Dorsolateral prefrontal cortex (tissue), 120 donors: ENCODE measurements at regions of chr19 and their contacts with region 1.

Region 1: GRCh38 chr19:19531951-19532805 is 3.5 kb downstream of the YJEFN3 start:
- DNase-seq: peak; percentile 78 to 92 (median 87)
- H3K4me3 ChIP-seq: peak overlapping the region in 23 of 59 donors; percentile 5 to 45 (median 23)
- H3K27ac ChIP-seq: peak overlapping the region in 2 of 59 donors; percentile 5 to 42
- H3K27me3 ChIP-seq: no peaks in the 10 kb centered on the region
- CTCF ChIP-seq: peak; percentile 79 to 98 (median 94)

Region 2: GRCh38 chr19:19618219-19619051 is 86.3 kb after region 1 on chr19 and contains the start of gene PBX4:
- intact Hi-C with region 1: no loop called
- DNase-seq: peak; percentile 78 to 94 (median 92)
- H3K4me3 ChIP-seq: peak within 1 kb of the TSS; percentile 29 to 75 (median 56)
- H3K27ac ChIP-seq: no peak within 1 kb of the TSS
- H3K27me3 ChIP-seq: no peaks in the 10 kb centered on the region
- CTCF ChIP-seq: peak in 2 of 56 donors; percentile 12 to 14
- total RNA-seq, gene PBX4: 1.2 to 9.5 (median 4.3) TPM

Region 3: DNA sequence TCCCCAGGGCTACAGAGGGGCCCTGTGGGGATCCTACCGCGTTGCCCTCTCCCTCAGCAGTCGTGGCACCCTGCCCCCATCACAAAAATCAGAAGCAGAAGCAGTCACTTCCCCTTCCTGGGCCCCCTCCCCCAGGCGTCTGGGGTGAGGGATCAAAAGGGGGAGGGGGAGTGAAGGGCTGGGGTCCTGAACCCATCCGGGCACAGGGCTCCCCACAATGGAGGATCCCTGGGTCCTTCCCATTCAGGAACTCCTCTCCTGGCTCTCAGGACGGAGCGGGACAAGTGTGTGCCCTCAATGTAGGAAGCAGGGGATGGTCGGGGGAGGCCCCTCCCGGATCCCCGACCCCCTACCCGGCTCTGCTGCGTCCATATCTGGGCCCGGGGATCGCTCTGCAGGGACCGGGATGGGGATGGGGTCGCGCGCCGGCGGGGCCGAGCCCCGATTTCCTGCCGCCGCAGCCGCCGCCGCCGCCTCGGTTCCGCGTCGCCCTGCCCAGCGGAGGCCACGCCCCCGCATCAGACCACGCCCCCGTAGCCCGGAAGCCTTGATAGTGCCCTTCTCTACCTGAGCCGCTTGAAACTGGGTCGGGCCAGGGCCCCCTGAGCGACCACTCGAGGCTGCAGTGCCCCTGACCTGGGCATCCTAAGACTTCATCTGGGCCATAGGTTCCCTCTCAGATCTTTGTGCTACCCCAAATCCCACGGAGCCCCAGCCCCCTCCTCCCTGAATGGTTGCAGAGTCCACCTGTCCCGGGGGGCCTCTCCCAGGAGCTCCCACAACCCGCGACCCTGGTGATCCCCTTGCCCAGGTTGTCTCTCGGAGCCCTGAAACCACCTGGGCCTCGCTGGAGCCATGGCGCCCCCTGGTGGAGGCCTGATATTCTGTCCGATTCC is 111.2 kb after region 1 on chr19 and contains the start of gene GMIP:
- intact Hi-C with region 1: loop called (anchors 1 to 5 kb)
- DNase-seq: peak in 9 of 10 donors; percentile 58 to 78 (median 68)
- H3K4me3 ChIP-seq: peak within 1 kb of the TSS; percentile 46 to 84 (median 68)
- H3K27ac ChIP-seq: peak within 1 kb of the TSS in 42 of 59 donors; percentile 15 to 84 (median 54)
- H3K27me3 ChIP-seq: no peaks in the 10 kb centered on the region
- CTCF ChIP-seq: peak; percentile 76 to 94 (median 88)
- total RNA-seq, gene GMIP: 5.0 to 20.2 (median 9.8) TPM

Region 4: DNA sequence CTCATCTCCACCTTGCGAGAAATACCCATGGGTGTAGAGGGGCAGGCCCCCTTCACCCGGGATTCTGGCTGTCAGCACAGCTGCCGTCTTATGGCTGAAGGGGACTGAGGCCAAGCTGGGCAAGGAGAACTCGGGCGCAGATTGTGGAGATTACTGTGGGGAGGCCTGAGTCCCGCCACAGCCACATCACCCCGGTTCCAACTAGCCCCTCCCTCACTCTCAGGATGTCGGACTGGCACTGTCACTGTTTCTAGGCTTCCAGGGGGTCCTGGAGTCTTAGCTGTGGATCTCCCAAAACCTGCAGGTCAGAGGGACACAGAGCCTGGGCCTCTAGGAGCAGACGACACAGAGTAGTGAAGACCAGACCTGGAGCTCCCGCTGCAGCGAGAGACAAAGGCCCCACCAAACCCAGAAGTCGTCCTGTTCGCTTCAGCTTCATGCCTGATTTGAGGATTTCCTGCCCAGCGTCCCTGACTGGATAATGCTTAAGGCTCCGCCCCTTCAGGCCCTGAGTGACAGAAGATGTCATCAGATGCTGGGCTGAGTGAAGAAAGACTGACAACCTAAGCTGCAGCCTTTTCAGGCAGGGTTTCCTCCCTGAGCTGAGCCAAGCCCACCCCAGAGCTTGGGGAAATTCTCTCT is 424.4 kb after region 1 on chr19:
- intact Hi-C with region 1: loop called (anchors 2 to 5 kb)
- DNase-seq: peak in 3 of 10 donors; percentile 20 to 52 (median 37)
- H3K4me3 ChIP-seq: peak overlapping the region in 2 of 59 donors; percentile 11 to 18
- H3K27ac ChIP-seq: peak overlapping the region in 1 of 59 donors; percentile 7
- H3K27me3 ChIP-seq: no peaks in the 10 kb centered on the region
- CTCF ChIP-seq: no peak